Gastrocnemius medialis (tissue), 4 donors: ENCODE measurements at regions of chr1 and their contacts with region 1.

Region 1: DNA sequence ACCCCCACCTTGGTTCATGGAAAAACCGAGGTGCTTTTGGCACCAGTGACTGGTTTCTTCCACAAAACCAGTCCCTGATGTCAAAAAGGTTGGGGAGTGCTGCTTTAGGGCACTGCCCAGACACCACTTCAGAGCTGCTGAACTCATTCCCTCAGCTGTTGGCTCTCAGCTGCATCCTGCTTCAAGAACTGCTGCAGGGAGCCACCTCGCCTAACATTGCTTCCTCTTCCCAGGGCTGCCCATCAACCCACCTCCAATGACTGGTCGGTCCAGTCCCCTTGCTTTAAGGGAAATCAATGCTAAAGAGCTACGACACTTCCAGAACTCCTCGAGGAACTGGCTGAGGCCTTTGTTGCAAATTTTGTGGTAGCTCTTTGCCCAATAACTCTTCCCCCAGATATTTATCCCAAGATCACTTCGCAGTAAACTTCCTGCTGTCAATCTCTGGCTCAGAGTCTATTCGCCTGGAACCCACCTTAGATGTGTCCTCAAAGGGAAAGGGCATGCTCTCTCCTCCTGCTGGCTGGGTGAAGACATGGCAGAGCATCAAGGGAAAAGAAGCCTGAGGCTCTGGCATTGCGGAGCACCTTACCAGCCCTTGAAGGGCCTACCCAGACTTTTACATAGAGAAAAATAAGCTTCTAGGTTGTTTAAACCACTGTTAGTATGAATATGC is 29.0 kb downstream of the C1orf52 start:
- DNase-seq: no peak
- ATAC-seq: no peak
- H3K4me3 ChIP-seq: no peak overlapping the region
- H3K27ac ChIP-seq: no peak overlapping the region
- H3K4me1 ChIP-seq: peaks cover 0 to 5% of the 10 kb centered on the region in 2 donors
- H3K27me3 ChIP-seq: no peaks in the 10 kb centered on the region
- CTCF ChIP-seq: no peak
- POLR2A ChIP-seq: no peak

Region 2: GRCh38 chr1:85116856-85117255 is 113.6 kb before region 1 on chr1:
- in situ Hi-C with region 1: loop called in 1 of 4 experiments (anchors 10 kb)
- intact Hi-C with region 1: no loop called
- DNase-seq: no peak
- ATAC-seq: no peak
- H3K4me3 ChIP-seq: no peak overlapping the region
- H3K27ac ChIP-seq: no peak overlapping the region
- H3K4me1 ChIP-seq: no peaks in the 10 kb centered on the region
- H3K27me3 ChIP-seq: no peaks in the 10 kb centered on the region
- CTCF ChIP-seq: no peak
- POLR2A ChIP-seq: no peak

Region 3: DNA sequence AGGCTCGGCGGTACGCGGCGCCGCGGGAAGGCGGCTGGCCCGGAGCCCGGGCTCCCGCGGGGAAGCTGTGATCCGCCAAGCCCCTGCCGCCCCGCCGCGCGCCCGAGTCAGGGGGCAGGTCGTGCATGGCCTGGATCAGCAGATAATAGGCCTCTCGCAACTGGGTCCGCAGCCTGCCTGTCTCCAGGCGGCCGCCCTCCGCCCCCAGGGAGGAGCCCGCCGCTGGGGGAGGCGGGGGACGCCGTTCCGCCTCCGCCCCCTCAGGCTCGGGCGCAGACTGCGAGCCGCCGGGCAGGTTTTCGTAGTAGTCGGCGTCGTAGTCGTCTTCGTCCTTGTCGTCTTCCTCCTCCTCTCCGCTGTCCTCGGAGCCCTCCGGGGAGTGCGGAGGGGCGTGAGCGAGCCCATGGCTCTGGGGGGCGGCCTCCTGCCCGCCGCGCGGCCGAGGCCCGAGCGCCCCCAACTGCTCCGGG is 29.5 kb before region 1 on chr1 and contains the start of gene SYDE2:
- in situ Hi-C with region 1: no loop called
- intact Hi-C with region 1: loop called (anchors 2 kb)
- DNase-seq: peak; percentile 38 to 60
- ATAC-seq: peak; percentile 77 to 79
- H3K4me3 ChIP-seq: peak within 1 kb of the TSS; percentile 76 to 96 (median 78)
- H3K27ac ChIP-seq: peak within 1 kb of the TSS; percentile 86 to 95 (median 94)
- H3K4me1 ChIP-seq: peaks cover 11 to 17% of the 10 kb centered on the region in 2 donors
- H3K27me3 ChIP-seq: no peaks in the 10 kb centered on the region
- CTCF ChIP-seq: no peak
- POLR2A ChIP-seq: peak; percentile 41 to 60
- total RNA-seq, gene SYDE2: 3.8 to 7.2 (median 4.9) TPM

Region 4: DNA sequence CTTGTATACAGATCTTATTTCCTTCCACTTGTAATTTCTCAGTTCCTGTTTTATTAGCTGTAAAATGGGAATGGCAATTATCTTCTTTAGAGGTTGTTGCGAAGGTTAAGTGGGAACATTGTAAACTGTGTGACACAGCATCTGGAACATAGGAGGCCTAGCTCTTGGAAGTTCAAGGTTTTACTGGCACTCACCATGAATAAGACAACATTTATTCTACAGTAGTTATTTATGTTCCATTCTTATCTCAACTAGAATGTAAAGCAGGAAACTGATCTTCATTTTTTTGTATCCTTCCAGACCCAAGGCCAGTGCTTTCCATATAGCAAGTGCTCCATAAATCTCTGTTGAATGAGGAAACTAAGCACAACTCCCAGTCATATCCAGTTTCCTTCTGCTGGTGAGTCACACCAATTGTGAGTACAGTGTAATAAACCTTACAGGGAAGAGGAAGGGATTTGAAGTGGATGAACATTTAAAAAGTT is 44.6 kb after region 1 on chr1:
- in situ Hi-C with region 1: no loop called
- intact Hi-C with region 1: no loop called
- DNase-seq: no peak
- ATAC-seq: peak; percentile 51 to 57
- H3K4me3 ChIP-seq: peak overlapping the region; percentile 83 to 99 (median 93)
- H3K27ac ChIP-seq: peak overlapping the region; percentile 96 to 99 (median 98)
- H3K4me1 ChIP-seq: peaks cover 23 to 27% of the 10 kb centered on the region in 2 donors
- H3K27me3 ChIP-seq: no peaks in the 10 kb centered on the region
- CTCF ChIP-seq: no peak
- POLR2A ChIP-seq: no peak

Region 5: DNA sequence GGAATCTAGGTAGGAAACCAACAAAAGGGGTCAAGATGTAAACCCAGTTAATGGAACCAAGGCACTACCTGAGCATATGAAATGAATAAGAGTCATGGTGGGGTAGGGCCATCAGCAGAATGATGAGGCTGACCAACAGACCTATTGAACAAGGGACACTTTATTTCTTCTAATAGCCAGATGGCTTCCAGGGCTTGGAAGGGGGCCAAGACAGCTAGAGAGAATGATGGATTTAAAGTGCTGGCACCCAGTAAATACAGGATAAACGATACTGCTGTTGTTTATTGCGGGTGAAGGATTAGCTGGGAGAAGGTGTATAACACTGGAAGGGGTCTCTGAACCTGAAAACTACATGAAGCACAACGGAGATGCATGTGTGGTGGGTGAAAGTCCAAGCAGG is 218.9 kb after region 1 on chr1:
- in situ Hi-C with region 1: no loop called
- intact Hi-C with region 1: no loop called
- DNase-seq: no peak
- ATAC-seq: no peak
- H3K4me3 ChIP-seq: no peak overlapping the region
- H3K27ac ChIP-seq: peak overlapping the region in 2 of 4 donors; percentile 38 to 47
- H3K4me1 ChIP-seq: peaks cover 24 to 45% of the 10 kb centered on the region in 2 donors
- H3K27me3 ChIP-seq: no peaks in the 10 kb centered on the region
- CTCF ChIP-seq: no peak
- POLR2A ChIP-seq: no peak